ENCODE measurements at regions of chr20 and their contacts with region 1.

Region 1: GRCh38 chr20:15930311-15931305 is 642.6 kb downstream of the KIF16B start:
- DNase-seq: peak; percentile 84
- ATAC-seq: peak; percentile 93
- H3K4me3 ChIP-seq: no peak overlapping the region
- H3K27ac ChIP-seq: no peak overlapping the region
- H3K4me1 ChIP-seq: peaks cover 20% of the 10 kb centered on the region
- H3K27me3 ChIP-seq: no peaks in the 10 kb centered on the region
- CTCF ChIP-seq: peak; percentile 92

Region 2: GRCh38 chr20:15406072-15406471 is 524.5 kb before region 1 on chr20:
- CTCF ChIA-PET with region 1: no interaction called
- POLR2A ChIA-PET with region 1: no interaction called
- intact Hi-C with region 1: loop called (anchors 1 kb)
- DNase-seq: peak; percentile 95
- ATAC-seq: peak; percentile 92
- H3K4me3 ChIP-seq: no peak overlapping the region
- H3K27ac ChIP-seq: peak overlapping the region; percentile 30; the same call in 1 of the 2 replicates
- H3K4me1 ChIP-seq: peaks cover 14% of the 10 kb centered on the region
- H3K27me3 ChIP-seq: no peaks in the 10 kb centered on the region
- CTCF ChIP-seq: no peak

Region 3: DNA sequence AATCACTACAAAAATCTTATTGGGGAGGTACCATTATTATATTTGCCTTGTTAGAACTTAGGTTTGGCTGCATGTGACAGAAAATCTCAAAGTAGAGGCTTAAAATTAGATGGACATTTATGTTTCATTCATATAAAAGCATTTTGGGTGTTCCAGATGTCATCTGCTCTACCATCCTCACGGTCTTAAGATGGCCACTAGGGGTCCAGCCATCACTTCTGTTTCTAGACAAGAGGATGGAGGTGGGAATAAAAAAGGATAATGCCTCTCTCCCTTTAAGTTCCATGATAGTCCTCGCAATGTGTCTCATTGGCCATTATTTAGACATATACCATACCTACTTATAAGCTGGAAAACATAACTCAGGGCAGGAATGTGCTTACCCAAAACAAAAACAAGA is 286.9 kb before region 1 on chr20:
- CTCF ChIA-PET with region 1: no interaction called
- POLR2A ChIA-PET with region 1: no interaction called
- intact Hi-C with region 1: loop called (anchors 1 kb)
- DNase-seq: peak; percentile 51
- ATAC-seq: peak; percentile 72; the same call in 1 of the 2 replicates
- H3K4me3 ChIP-seq: no peak overlapping the region
- H3K27ac ChIP-seq: no peak overlapping the region
- H3K4me1 ChIP-seq: peaks cover 4% of the 10 kb centered on the region
- H3K27me3 ChIP-seq: no peaks in the 10 kb centered on the region
- CTCF ChIP-seq: peak; percentile 80

Region 4: DNA sequence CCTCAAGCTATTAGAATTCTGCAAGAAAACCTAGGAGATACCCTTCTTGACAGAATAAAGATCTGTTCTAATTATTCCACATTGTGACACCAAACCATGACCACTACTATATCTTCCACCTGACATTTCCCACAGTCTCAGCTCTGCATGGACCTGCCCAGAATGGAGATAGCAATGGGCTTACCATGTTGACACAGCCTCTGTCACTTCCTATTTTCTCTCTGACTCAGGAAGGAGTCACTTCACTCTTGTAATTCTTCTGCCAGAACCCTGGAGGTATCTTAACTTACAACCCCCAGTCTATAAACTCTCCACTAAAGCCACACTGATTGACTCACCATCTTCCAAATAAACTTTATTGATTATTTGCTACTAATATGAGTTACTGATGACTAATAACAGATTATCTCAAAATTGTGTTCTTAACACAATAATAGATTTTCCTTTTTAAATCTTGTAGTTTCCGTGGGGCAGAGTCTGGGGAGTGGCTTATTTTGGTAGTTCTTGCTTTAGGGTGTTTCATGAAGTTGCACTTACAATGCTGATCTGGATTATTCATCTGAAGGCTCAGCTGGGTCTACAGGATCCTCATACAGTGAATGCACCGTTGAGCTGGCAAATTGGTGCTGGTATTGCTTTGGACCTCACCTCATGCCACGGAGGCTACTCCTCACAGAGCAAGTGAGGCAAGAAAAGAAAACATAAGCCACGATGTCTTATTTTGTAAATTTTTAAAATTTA is 227.3 kb before region 1 on chr20:
- CTCF ChIA-PET with region 1: no interaction called
- POLR2A ChIA-PET with region 1: no interaction called
- intact Hi-C with region 1: loop called (anchors 2 kb)
- DNase-seq: peak; percentile 99
- ATAC-seq: peak; percentile 98
- H3K4me3 ChIP-seq: no peak overlapping the region
- H3K27ac ChIP-seq: peak overlapping the region; percentile 88
- H3K4me1 ChIP-seq: peaks cover 39% of the 10 kb centered on the region
- H3K27me3 ChIP-seq: no peaks in the 10 kb centered on the region
- CTCF ChIP-seq: no peak

Region 5: DNA sequence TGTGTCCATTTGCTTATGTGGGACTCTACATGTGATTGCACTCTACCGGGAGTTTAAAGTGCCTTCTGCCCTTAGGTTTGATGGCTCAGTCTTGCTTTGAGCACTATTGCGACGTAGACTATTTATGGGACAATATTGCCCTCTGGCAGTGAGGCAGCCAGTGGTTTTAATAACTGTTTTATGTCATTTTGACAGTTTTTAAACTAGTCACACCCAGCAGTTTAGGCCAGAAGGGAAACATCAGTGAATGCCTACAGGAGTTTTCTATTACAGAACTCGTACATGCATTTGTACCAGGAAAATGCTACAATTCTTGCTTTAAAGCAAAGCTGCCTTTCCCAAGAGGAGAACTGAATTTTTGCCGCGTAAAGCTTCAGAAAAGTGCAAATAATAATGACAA is 171.0 kb before region 1 on chr20:
- CTCF ChIA-PET with region 1: no interaction called
- POLR2A ChIA-PET with region 1: no interaction called
- intact Hi-C with region 1: loop called (anchors 2 kb)
- DNase-seq: peak; percentile 31
- ATAC-seq: peak; percentile 23; the same call in 1 of the 2 replicates
- H3K4me3 ChIP-seq: no peak overlapping the region
- H3K27ac ChIP-seq: no peak overlapping the region
- H3K4me1 ChIP-seq: peaks cover 18% of the 10 kb centered on the region
- H3K27me3 ChIP-seq: no peaks in the 10 kb centered on the region
- CTCF ChIP-seq: peak; percentile 26; the same call in 1 of the 2 replicates

Region 6: DNA sequence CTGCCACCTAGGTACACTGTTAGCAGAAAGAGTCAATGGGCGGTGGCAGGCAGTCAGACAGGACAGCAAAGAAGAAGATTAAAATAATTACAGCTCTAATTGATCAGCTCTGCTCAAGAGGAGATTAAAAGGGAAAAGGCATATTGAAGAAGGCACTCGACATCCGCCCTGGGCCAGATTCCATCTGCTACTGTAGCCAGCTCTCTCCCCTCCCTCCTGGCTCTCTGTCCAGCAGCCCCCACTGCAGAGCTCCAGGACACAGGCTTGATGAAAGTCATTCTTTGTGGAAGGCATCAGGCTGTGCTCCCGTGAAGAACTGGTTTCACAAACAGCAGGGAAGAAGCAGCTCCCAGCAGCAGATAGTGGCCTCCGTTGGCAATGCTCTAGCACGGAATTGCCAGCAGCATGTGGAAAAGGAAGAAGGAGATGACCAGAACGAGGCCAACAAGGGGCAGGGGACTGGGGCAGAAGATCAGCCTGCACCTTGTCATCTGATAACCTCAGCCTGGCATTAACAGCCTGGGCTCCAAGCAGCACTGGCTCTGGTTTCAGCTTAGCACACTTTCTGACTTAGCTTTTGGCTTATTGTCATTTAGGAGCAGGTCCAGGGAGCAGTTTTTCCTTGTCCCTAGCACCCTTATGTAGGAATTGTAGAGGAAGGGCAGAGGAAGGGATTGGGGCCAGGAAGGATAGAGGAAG is 176.7 kb after region 1 on chr20:
- CTCF ChIA-PET with region 1: no interaction called
- POLR2A ChIA-PET with region 1: no interaction called
- intact Hi-C with region 1: no loop called
- DNase-seq: no peak
- ATAC-seq: no peak
- H3K4me3 ChIP-seq: no peak overlapping the region
- H3K27ac ChIP-seq: peak overlapping the region; percentile 93
- H3K4me1 ChIP-seq: peaks cover 44% of the 10 kb centered on the region
- H3K27me3 ChIP-seq: no peaks in the 10 kb centered on the region
- CTCF ChIP-seq: no peak

Measured in PC-3 (cell line).